ENCODE measurements at regions of chr12 and their contacts with region 1.

Region 1: GRCh38 chr12:113912760-113913329 is 53.3 kb downstream of the RBM19 start:
- DNase-seq: no peak
- ATAC-seq: peak; percentile 69

Region 2: DNA sequence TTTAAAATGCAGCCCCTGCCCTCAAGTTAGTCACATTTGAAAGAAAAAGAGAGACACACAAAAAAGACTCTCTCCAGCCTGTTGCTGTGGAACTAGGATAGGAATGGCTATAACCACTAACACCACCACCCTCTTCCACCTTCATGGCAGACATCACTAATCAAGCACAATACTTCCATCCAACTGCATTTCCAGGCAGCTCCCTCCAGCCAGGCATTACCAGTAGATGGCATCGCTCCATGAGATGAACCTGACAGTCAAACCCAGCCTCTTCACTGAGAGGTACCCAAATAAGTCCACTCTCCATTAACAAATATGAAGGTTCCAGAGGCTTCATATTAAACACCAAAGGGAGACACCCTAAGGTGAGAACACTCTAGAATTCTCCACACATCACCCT is 602.4 kb before region 1 on chr12:
- intact Hi-C with region 1: loop called (anchors 5 kb)
- DNase-seq: no peak
- ATAC-seq: no peak

Region 3: DNA sequence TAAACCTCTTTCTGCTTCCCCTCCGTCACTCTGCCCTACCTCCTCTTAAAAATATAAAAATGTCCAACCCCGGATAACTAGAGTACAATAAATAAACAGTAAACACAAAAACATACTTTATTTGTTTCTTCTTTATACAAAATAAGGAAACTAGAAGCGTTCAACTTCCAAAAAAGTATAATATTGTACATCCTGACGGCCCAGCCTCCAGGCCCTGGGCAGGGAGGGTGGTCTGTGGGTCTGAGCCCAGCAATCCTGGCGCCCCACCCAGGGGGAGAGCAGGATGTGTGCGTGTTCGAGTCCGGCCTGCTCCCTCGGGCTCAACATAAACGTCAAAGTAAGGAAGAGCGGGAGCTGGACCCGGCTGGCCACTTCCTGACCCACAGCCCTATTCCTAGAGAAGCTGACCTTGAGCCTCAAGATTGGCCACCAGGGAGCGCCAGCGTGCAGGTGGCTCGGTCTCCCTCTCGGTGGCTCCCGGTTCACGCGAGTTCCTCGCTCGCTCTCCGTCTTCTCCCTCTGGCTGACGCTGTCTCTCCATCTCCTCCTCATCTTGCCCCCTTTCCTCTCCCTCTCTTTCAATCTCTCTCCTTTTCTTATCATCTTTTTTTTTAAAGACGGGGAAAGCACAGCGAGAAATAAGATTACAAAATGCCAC is 450.6 kb before region 1 on chr12:
- intact Hi-C with region 1: loop called (anchors 1 kb)
- DNase-seq: peak; percentile 90
- ATAC-seq: peak; percentile 85